Right cardiac atrium (tissue), 5 donors: ENCODE measurements at regions of chr5 and their contacts with region 1.

Region 1: GRCh38 chr5:168987543-168988300 is 313.2 kb downstream of the SLIT3 start:
- DNase-seq: peak; percentile 70 to 90 (median 78)
- ATAC-seq: peak; percentile 29 to 53
- H3K4me3 ChIP-seq: no peak overlapping the region
- H3K27ac ChIP-seq: no peak overlapping the region
- H3K4me1 ChIP-seq: no peaks in the 10 kb centered on the region
- H3K27me3 ChIP-seq: no peaks in the 10 kb centered on the region

Region 2: DNA sequence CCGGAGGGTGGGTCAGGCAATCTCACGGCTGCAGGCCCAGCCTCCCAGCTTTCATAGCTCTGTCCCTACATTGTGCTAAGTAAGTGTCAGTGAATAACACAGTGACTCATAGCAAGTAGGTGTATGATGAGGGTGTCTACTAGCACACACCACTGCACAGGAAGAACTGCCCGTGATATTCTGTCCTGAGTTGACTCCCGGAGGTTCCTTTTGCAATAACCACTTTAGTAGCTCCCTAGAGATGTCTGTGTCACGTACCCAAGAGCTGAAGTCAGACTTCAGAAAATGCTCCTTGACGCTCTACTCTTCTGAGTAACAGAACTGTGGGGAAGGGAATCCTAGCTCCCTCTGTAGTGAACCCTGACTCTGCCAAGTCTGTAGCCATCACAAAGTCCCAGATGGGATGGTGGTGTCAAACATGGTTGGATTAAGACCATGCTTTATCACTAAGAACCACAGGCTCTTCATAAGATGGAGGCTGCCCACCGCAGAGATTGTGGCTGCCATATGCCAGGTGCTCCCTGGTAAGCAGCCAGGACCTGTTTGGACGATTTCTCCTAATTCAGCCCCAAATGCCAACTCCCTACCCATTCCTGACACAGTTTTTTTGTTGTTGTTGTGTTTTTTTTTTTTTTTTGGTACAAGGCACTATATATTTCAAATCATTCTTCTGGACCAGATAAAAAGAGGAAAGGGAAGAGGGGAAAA is 55.9 kb before region 1 on chr5:
- intact Hi-C with region 1: no loop called
- DNase-seq: peak in 1 of 3 donors; percentile 26
- ATAC-seq: peak; percentile 80 to 93
- H3K4me3 ChIP-seq: no peak overlapping the region
- H3K27ac ChIP-seq: peak overlapping the region; percentile 68
- H3K4me1 ChIP-seq: peaks cover 5% of the 10 kb centered on the region
- H3K27me3 ChIP-seq: no peaks in the 10 kb centered on the region

Region 3: GRCh38 chr5:169161022-169161680 is 173.4 kb after region 1 on chr5:
- intact Hi-C with region 1: loop called in 1 of 4 experiments (anchors 10 kb)
- DNase-seq: peak; percentile 64 to 84 (median 72)
- ATAC-seq: peak; percentile 80 to 83
- H3K4me3 ChIP-seq: no peak overlapping the region
- H3K27ac ChIP-seq: peak overlapping the region; percentile 72
- H3K4me1 ChIP-seq: peaks cover 11% of the 10 kb centered on the region
- H3K27me3 ChIP-seq: no peaks in the 10 kb centered on the region

Region 4: DNA sequence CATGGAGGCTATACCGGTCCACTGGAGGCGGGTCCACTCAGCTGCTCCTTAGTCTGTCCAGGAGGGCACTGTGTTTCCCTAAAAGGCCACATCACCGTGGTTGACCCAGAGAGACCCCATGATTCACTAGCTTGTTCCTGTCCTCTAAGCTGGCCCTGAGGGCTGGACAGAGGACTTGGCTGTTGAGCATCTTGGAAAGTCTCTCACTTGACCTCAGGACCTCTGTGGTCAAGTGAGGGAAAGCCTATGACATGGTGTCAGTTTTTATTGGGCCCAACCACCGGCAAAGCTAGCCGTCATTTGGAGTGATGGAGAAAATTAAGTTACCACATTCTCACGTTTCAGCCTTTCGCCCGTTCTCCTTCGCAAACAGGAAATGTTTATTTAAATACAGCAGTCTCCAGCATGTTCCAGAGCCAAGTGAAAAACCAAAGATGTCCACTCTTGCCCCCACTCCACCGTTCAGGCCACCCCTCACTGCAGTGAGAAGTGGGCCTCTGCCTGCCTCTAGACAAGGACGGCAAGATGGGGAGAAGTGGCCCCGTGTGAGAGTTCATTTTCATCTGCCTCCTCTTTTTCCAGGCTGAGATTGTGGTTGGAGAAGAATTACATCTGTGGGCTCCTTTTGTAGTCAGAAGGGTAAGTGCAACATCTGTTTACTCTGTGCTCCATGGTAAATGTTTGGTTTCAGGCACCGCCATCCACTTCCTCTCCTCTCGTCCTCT is 308.9 kb after region 1 on chr5:
- intact Hi-C with region 1: loop called in 3 of 4 experiments (anchors 5 kb)
- DNase-seq: peak; percentile 43 to 67 (median 48)
- ATAC-seq: peak; percentile 38 to 46
- H3K4me3 ChIP-seq: no peak overlapping the region
- H3K27ac ChIP-seq: peak overlapping the region; percentile 60
- H3K4me1 ChIP-seq: peaks cover 9% of the 10 kb centered on the region
- H3K27me3 ChIP-seq: no peaks in the 10 kb centered on the region